Right ventricle myocardium inferior (tissue), 1 donor: ENCODE measurements at regions of chr7 and their contacts with region 1.

Region 1: GRCh38 chr7:25844102-25844870 is 307.7 kb upstream of the NFE2L3 start:
- DNase-seq: no peak
- ATAC-seq: no peak

Region 2: DNA sequence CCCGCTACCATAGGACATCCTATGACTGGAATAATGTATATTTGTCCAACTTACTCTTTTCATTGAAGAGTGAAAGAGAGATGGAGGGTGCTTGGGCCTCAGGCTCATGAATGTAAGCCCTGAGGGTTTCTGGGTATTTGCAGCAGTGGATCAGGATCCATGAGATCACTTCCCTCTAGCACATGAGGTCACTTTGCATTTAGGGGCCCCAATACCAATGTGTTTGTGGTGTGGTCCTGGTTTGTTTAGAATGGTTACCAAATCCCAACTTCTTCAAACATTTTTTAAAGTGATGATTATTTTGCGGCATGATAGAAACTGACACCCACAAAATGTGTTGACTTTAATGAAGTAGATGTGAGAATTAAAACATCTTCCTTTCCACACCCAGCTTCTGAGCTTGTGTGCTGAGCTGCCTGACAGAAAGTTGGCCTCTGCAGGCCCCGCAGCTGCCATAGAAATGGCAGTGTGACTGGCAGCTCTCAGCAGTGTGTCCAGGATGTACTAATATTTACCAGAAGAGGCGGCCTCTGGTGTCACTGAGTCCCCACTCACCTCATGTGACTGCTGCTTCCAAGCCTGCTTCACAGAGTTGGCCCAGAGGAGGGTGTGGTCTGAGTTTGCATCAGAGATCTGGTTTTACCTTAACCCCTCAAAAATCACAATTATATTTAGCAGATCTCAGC is 168.4 kb before region 1 on chr7:
- intact Hi-C with region 1: loop called (anchors 5 kb)
- DNase-seq: peak; percentile 74
- ATAC-seq: peak; percentile 92

Region 3: DNA sequence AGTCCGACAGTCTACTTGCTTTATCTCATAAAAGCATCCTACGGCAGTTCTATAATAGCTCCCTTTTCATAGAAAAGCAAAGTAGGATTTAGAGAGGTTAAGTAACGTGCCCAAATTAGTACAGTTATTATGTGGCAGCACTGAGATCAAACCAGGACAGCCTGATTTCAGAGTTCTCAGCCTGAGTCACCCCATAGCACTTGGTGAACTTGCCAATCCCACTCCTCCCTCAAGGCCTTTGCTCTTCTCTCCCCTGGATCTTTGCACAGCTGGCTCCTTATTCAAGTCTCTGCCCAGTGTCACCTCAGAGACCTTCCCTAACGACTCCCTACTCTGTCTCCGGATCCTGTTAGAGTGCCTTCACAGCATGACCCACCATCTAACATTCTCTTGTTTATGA is 130.3 kb before region 1 on chr7:
- intact Hi-C with region 1: loop called (anchors 5 kb)
- DNase-seq: no peak
- ATAC-seq: no peak